Psoas muscle (tissue), 8 donors: ENCODE measurements at regions of chr6 and their contacts with region 1.

Region 1: DNA sequence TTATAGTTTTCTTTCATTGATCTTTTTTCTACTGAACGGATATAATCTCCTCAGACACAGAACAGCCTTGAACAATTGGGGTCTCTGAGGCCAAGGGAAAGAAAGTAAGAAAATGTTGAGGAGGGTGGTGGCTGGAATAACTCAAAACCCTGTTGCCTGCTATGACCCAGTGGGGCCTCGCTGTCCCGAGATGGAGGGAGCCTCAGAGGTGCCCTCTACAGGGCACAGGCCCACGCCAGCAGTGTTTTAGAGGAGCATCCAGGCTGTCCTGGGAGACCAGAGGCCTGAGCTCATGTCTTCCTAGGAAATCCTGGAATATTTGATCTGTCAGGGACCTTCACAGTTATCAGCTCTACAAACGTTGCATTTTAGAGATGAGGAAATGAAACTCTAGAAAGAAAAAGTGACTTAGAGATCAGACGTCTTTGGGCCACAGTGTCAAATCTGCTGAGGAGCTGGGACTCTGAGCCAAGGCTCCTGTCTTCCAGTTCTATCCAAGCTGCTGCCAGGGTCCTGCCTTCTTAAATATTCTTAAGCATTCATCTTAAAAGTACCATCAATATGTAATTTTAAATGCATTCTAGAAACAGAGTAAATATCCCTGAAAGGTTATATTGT is 26.3 kb downstream of the ALDH5A1 start:
- DNase-seq: peak; percentile 33 to 74
- ATAC-seq: peak; percentile 71 to 98 (median 88)
- H3K4me3 ChIP-seq: no peak overlapping the region
- H3K27ac ChIP-seq: no peak overlapping the region
- H3K4me1 ChIP-seq: no peaks in the 10 kb centered on the region
- H3K27me3 ChIP-seq: no peaks in the 10 kb centered on the region
- CTCF ChIP-seq: peak; percentile 64

Region 2: GRCh38 chr6:24431045-24431451 is 90.0 kb before region 1 on chr6:
- intact Hi-C with region 1: loop called (anchors 5 kb)
- DNase-seq: no peak
- ATAC-seq: peak; percentile 65 to 75 (median 68)
- H3K4me3 ChIP-seq: no peak overlapping the region
- H3K27ac ChIP-seq: no peak overlapping the region
- H3K4me1 ChIP-seq: peaks cover 14% of the 10 kb centered on the region
- H3K27me3 ChIP-seq: no peaks in the 10 kb centered on the region
- CTCF ChIP-seq: peak; percentile 68